HCT116 (cell line): ENCODE measurements at regions of chr7 and their contacts with region 1.

Region 1: GRCh38 chr7:117119192-117119924 is 166.1 kb downstream of the ST7 start:
- DNase-seq: peak; percentile 62
- ATAC-seq: peak; percentile 67
- H3K4me3 ChIP-seq: no peak overlapping the region
- H3K27ac ChIP-seq: no peak overlapping the region
- H3K4me1 ChIP-seq: peaks cover 4% of the 10 kb centered on the region in 2 experiments
- H3K27me3 ChIP-seq: no peaks in the 10 kb centered on the region
- CTCF ChIP-seq: peak; percentile 83 to 91 (median 86)
- POLR2A ChIP-seq: no peak
- RAD21 ChIP-seq: peak; percentile 90

Region 2: GRCh38 chr7:116828281-116828680 is 291.1 kb before region 1 on chr7:
- CTCF ChIA-PET with region 1: no interaction called
- POLR2A ChIA-PET with region 1: no interaction called
- RAD21 ChIA-PET with region 1: no interaction called
- intact Hi-C with region 1: loop called (anchors 2 kb)
- DNase-seq: no peak
- ATAC-seq: peak; percentile 61; the same call in 1 of the 2 replicates
- H3K4me3 ChIP-seq: no peak overlapping the region
- H3K27ac ChIP-seq: no peak overlapping the region
- H3K4me1 ChIP-seq: no peaks in the 10 kb centered on the region
- H3K27me3 ChIP-seq: no peaks in the 10 kb centered on the region
- CTCF ChIP-seq: peak; percentile 38 to 47 (median 45); a peak in 5 of 6 replicates
- POLR2A ChIP-seq: no peak
- RAD21 ChIP-seq: peak; percentile 70

Region 3: DNA sequence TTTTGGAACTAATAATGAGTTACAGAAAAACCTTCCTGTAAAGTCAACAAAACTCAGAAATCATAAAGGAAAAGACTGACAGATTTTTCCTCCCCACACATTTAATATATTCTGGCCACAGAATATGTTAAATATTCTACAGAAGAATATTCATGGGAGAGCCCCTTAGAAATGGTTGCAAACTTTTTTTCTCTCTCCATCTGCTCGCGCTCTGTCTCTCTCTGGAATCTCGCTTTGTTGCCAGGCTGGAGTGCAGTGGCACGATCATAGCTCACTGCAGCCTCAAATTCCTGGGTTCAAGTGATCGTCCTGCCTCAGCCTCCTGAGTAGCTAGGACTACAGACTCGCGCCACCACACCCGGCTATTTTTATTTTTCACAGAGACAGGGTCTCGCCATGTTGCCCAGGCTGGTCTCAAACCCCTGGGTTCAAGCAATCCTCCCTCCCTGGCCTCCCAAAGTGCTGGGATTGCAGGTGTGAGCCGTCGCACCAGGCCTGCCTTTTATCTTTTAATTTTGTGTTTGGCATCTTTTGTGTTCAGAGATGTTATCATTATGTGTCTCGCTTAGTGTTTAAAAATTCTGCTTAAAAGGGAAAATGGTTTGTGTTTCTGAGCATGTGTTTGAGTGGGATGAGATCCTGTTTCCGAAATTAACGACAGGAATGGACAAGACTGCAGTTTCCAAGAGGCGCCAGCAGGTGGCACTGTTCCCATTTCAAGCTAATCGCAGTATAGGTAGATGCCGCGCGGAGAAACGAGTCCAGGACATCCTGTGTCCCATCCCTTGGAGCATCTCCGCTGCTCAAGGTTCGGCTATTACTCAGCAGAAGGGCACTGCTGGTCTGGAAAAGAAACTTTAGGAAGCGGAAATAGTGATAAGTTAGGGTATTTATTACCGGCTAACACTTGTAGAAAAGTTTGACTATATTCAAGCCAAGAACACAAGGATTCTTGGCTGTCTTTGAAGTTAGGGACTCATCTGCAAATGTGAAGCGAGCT is 189.1 kb before region 1 on chr7:
- CTCF ChIA-PET with region 1: interaction called, 11 read pairs
- POLR2A ChIA-PET with region 1: no interaction called
- RAD21 ChIA-PET with region 1: no interaction called
- intact Hi-C with region 1: loop called (anchors 1 kb)
- DNase-seq: peak; percentile 69
- ATAC-seq: peak; percentile 96
- H3K4me3 ChIP-seq: peak overlapping the region in 1 of 2 experiments; percentile 15; a peak in 1 of 4 replicates
- H3K27ac ChIP-seq: no peak overlapping the region
- H3K4me1 ChIP-seq: peaks cover 0 to 6% of the 10 kb centered on the region in 2 experiments; a peak in 2 of 4 replicates
- H3K27me3 ChIP-seq: no peaks in the 10 kb centered on the region
- CTCF ChIP-seq: peak; percentile 84 to 93 (median 86)
- POLR2A ChIP-seq: no peak
- RAD21 ChIP-seq: peak; percentile 89